Caco-2 (cell line): ENCODE measurements at regions of chr10 and their contacts with region 1.

Region 1: DNA sequence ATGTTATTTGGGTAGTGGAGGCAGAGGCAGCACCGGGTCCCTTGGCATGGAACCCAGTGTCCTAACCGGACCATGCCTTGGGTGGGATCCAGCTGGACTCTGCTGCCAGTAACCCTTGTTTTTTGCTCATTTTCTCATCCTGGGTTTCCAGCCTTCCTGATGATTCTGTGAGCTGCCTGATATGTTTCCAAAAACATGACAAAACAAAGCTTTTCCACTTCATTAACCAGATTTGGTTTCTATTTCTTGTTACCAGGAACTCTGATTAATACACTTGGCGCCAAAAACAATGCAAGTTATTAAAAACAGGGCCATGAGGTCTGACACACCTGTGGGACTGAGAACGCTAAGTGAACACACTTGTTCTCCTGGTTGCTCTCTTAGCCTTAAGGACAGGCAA is 32.8 kb upstream of the DLG5 start:
- DNase-seq: no peak
- H3K4me3 ChIP-seq: no peak overlapping the region
- H3K4me3 Mint-ChIP-seq: no peak overlapping the region
- H3K27ac Mint-ChIP-seq: no peak overlapping the region
- H3K4me1 ChIP-seq: no peaks in the 10 kb centered on the region
- H3K4me1 Mint-ChIP-seq: no peaks in the 10 kb centered on the region
- H3K27me3 ChIP-seq: no peaks in the 10 kb centered on the region
- H3K27me3 Mint-ChIP-seq: peaks cover 2% of the 10 kb centered on the region
- CTCF ChIP-seq: no peak

Region 2: DNA sequence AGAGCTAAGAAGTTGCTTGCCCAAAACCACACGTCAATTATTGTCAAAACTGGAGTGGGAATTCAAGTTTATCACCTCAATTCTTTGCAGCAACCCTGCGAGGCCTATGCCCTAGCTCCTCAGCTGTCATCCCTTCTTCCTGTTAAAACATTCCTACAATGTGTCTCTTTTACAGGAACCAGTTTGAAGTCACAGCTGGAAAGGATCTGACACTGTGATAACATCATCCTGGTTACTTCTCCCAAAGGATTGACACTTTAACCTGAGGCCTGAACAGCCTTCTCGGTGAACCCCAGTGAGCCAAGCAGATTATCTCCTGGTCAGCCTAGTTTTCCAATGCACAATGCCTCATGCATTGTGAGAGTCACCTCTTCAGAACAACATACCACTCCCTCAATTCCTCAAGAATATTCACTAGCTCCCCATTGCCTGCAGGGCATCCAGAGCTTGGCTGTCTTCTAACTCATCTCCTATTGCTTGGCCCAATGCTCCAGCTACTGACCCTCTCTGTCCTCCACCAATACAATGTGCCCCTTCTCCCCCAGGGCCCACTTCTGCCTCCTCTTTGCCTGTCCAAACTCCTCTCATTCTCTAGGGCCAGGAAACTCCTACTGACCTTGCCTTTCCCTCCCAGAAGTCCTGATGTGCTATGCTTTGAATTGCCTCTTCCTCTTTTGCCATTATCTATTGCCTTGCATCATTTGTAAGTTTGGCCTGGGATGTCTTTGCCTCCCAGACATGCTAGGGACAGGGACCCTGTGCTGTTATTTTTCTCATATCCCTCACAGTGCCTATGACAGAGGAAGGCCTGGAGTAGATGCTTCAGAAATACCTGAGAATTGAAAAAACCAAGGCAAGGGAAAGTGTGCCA is 22.5 kb before region 1 on chr10:
- CTCF ChIA-PET with region 1: interaction called, 12 read pairs
- POLR2A ChIA-PET with region 1: no interaction called
- intact Hi-C with region 1: no loop called
- DNase-seq: no peak
- H3K4me3 ChIP-seq: no peak overlapping the region
- H3K4me3 Mint-ChIP-seq: no peak overlapping the region
- H3K27ac Mint-ChIP-seq: no peak overlapping the region
- H3K4me1 ChIP-seq: no peaks in the 10 kb centered on the region
- H3K4me1 Mint-ChIP-seq: peaks cover 9% of the 10 kb centered on the region
- H3K27me3 ChIP-seq: no peaks in the 10 kb centered on the region
- H3K27me3 Mint-ChIP-seq: no peaks in the 10 kb centered on the region
- CTCF ChIP-seq: no peak